ENCODE measurements at regions of chr11 and their contacts with region 1.

Region 1: DNA sequence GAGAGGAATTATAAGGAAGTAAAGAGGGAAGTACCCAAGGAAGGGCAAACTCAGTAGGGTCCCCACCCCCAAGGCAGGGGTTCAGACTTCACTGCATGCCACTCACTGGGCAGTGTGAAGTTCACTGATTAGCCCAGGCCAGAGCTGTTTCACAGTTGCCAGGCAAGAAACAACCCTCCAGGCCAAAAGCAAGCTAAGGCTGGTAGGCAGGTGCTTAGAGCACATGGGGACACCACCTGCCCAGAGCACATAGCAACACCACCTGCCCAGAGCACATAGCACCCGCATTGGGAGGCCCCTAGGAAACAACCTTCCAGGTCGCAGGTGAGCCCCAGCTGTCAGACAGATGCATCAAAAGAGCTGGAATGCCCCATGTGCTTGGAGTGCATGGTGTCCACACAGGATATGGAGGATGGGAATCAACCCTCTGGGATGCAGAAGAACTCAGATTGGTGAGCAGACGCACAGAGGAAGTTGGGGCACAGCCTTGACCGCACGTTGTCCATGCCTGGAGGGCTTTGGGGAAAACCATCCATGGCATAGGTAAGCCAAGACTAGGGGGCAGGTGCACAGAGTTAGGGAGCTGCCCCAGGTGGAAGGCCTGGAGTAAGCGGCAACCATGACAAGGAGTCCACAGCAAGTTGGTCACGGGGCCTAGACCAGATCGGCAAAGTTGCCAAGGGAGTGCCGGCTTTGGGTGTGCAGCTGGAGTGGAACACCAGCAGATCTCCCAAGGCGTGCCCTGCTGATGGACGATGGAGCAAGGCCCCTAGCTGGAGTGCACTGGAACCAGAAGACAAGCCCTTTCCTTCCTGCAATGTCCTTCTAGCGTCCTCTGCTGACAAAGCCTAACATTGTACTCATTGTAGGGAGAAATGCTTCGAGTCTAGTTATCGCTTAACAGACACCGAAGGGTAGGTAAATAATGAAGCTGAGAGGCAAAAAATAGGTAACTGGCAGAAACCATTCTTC is 7.8 kb upstream of the TMEM216 start:
- DNase-seq: no peak
- ATAC-seq: peak; percentile 16 to 49 (median 20)
- H3K4me3 ChIP-seq: no peak overlapping the region
- H3K27ac ChIP-seq: no peak overlapping the region
- H3K4me1 ChIP-seq: no peaks in the 10 kb centered on the region
- H3K27me3 ChIP-seq: no peaks in the 10 kb centered on the region
- CTCF ChIP-seq: no peak

Region 2: GRCh38 chr11:61254403-61255025 is 130.0 kb before region 1 on chr11:
- intact Hi-C with region 1: loop called in 2 of 3 experiments (anchors 10 kb)
- DNase-seq: peak; percentile 40 to 79 (median 68)
- ATAC-seq: peak; percentile 81 to 97 (median 92)
- H3K4me3 ChIP-seq: no peak overlapping the region
- H3K27ac ChIP-seq: no peak overlapping the region
- H3K4me1 ChIP-seq: no peaks in the 10 kb centered on the region
- H3K27me3 ChIP-seq: no peaks in the 10 kb centered on the region
- CTCF ChIP-seq: peak; percentile 73 to 84 (median 78)

Region 3: DNA sequence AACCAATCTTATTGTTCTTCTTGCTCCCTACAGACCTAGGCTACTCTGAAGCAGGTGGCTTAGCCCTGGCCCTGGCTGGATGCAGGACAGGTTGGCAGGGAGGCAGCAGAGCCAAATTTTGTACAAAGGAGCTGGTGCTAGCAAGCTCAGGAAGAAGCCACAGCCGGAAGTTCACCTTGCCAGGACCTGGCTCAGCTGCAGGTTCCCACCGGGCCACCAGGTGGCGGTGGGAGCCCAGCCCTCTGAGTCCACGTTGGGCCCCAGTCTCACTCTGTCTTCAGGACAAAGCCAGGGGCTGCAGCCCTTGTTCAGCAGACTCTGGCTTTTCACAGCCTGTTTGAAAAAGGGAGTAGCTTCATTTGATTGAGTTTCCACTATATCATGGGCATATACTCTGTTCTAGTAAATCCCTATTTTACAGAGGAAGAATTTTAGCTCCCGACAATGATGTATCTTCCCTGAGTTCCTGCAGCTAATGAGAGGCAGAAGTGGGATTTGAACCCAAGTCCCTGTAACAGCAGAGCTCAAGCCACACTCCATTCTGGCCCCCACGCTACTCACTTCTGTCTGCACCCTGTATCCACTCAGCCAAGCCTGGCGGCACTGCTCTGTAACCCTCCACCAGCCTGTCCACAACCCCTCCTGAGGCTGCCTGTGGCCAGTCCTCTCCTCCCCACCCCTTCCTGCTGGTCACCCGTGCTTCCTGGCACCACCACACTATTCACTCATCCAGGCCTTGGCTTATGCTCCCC is 48.2 kb before region 1 on chr11:
- intact Hi-C with region 1: loop called in 2 of 3 experiments (anchors 5 kb)
- DNase-seq: peak; percentile 64 to 93 (median 87)
- ATAC-seq: peak; percentile 67 to 82 (median 78)
- H3K4me3 ChIP-seq: no peak overlapping the region
- H3K27ac ChIP-seq: peak overlapping the region in 3 of 4 donors; percentile 60 to 63 (median 63)
- H3K4me1 ChIP-seq: peaks cover 21 to 32% (median 23%) of the 10 kb centered on the region in 3 donors
- H3K27me3 ChIP-seq: no peaks in the 10 kb centered on the region
- CTCF ChIP-seq: peak; percentile 95 to 96 (median 96)

Measured in pancreas (tissue), 10 donors.